B cell (primary cell): ENCODE measurements at regions of chr3 and their contacts with region 1.

Region 1: GRCh38 chr3:184561061-184561912 is at the start of gene EPHB3:
- DNase-seq: peak; percentile 96
- ATAC-seq: peak; percentile 89
- H3K4me3 ChIP-seq: peak within 1 kb of the TSS; percentile 41 to 67 (median 52)
- H3K4me3 Mint-ChIP-seq: peak within 1 kb of the TSS; percentile 88
- H3K27ac ChIP-seq: no peak within 1 kb of the TSS
- H3K27ac Mint-ChIP-seq: no peak within 1 kb of the TSS
- H3K4me1 ChIP-seq: peaks cover 19 to 22% of the 10 kb centered on the region in 2 donors
- H3K4me1 Mint-ChIP-seq: peaks cover 15% of the 10 kb centered on the region
- H3K27me3 ChIP-seq: peaks cover 0 to 53% (median 37%) of the 10 kb centered on the region in 4 experiments
- H3K27me3 Mint-ChIP-seq: peaks cover 35% of the 10 kb centered on the region
- CTCF ChIP-seq: peak; percentile 99
- total RNA-seq, gene EPHB3: 0.07 TPM in 1 of 2 replicates, not detected in the other

Region 2: GRCh38 chr3:184579504-184579903 is 18.2 kb after region 1 on chr3:
- CTCF ChIA-PET with region 1: interaction called, 10 read pairs
- POLR2A ChIA-PET with region 1: no interaction called
- intact Hi-C with region 1: no loop called
- DNase-seq: no peak
- ATAC-seq: no peak
- H3K4me3 ChIP-seq: no peak overlapping the region
- H3K4me3 Mint-ChIP-seq: no peak overlapping the region
- H3K27ac ChIP-seq: no peak overlapping the region
- H3K27ac Mint-ChIP-seq: no peak overlapping the region
- H3K4me1 ChIP-seq: peaks cover 9 to 12% of the 10 kb centered on the region in 2 donors
- H3K4me1 Mint-ChIP-seq: peaks cover 12% of the 10 kb centered on the region
- H3K27me3 ChIP-seq: peaks cover 0 to 26% (median 5%) of the 10 kb centered on the region in 4 experiments
- H3K27me3 Mint-ChIP-seq: peaks cover 38% of the 10 kb centered on the region
- CTCF ChIP-seq: no peak

Region 3: GRCh38 chr3:184727357-184728009 is 166.2 kb after region 1 on chr3:
- CTCF ChIA-PET with region 1: interaction called, 9 read pairs
- POLR2A ChIA-PET with region 1: no interaction called
- intact Hi-C with region 1: loop called (anchors 1 kb)
- DNase-seq: peak; percentile 74
- ATAC-seq: peak; percentile 63
- H3K4me3 ChIP-seq: no peak overlapping the region
- H3K4me3 Mint-ChIP-seq: no peak overlapping the region
- H3K27ac ChIP-seq: no peak overlapping the region
- H3K27ac Mint-ChIP-seq: no peak overlapping the region
- H3K4me1 ChIP-seq: no peaks in the 10 kb centered on the region
- H3K4me1 Mint-ChIP-seq: no peaks in the 10 kb centered on the region
- H3K27me3 ChIP-seq: peaks cover 0 to 5% (median 0%) of the 10 kb centered on the region in 4 experiments
- H3K27me3 Mint-ChIP-seq: peaks cover 13% of the 10 kb centered on the region
- CTCF ChIP-seq: peak; percentile 74

Region 4: GRCh38 chr3:184765730-184766074 is 204.4 kb after region 1 on chr3:
- CTCF ChIA-PET with region 1: interaction called, 28 read pairs
- POLR2A ChIA-PET with region 1: no interaction called
- intact Hi-C with region 1: no loop called
- DNase-seq: peak; percentile 75
- ATAC-seq: peak; percentile 88
- H3K4me3 ChIP-seq: no peak overlapping the region
- H3K4me3 Mint-ChIP-seq: peak overlapping the region; percentile 18
- H3K27ac ChIP-seq: no peak overlapping the region
- H3K27ac Mint-ChIP-seq: peak overlapping the region; percentile 1
- H3K4me1 ChIP-seq: peaks cover 22 to 25% of the 10 kb centered on the region in 2 donors
- H3K4me1 Mint-ChIP-seq: peaks cover 26% of the 10 kb centered on the region
- H3K27me3 ChIP-seq: no peaks in the 10 kb centered on the region
- H3K27me3 Mint-ChIP-seq: peaks cover 7% of the 10 kb centered on the region
- CTCF ChIP-seq: no peak